ENCODE measurements at regions of chr12 and their contacts with region 1.

Region 1: DNA sequence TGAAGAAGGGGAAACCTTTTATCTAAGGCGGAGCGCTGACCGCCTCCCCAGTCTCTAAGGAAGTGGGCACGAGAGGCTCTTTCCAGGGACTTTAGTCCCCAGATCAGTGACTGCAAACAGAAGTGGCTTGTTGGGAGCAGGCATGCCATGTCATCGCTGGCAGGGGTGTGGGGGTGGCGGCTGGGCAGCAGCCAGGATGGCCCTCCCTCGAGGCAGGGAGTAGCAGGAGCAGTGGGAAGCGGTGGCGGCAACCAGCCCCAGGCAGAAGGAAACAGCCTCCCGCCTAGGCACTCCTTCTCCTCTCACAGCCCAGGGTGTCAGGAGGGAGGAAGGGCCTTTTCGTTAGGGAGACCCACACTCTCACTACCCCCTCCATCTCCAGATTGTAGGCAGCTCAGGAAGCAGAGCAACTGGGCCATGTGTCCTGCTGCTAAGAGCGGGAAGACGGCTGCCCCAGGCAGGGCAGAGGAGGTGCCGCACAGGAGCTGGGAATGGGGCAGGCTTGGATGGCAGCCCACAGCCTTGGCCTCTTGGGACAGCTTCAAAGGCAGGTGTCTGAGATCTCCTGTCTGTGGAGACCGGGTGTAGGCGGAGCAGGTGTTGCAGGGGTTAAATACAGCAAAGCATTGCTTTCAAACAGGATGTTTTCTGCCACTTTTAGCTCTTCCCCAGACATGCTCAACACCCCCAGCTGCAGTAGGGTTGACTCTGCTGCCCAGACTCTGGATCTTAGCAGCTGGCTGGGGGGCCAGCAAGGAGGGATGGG is 21.8 kb downstream of the VDR start:
- DNase-seq: peak; percentile 44
- H3K4me3 Mint-ChIP-seq: peak overlapping the region; percentile 94
- H3K27ac Mint-ChIP-seq: peak overlapping the region; percentile 100
- H3K4me1 Mint-ChIP-seq: peaks cover 91% of the 10 kb centered on the region
- H3K27me3 Mint-ChIP-seq: no peaks in the 10 kb centered on the region

Region 2: GRCh38 chr12:47079468-47079980 is 803.4 kb before region 1 on chr12 and contains the starts of genes AMIGO2 and PCED1B:
- intact Hi-C with region 1: loop called (anchors 10 kb)
- DNase-seq: peak; percentile 63
- H3K4me3 Mint-ChIP-seq: peak within 1 kb of the TSS; percentile 97
- H3K27ac Mint-ChIP-seq: peak within 1 kb of the TSS; percentile 97
- H3K4me1 Mint-ChIP-seq: peaks cover 81% of the 10 kb centered on the region
- H3K27me3 Mint-ChIP-seq: no peaks in the 10 kb centered on the region
- total RNA-seq, gene AMIGO2: 11.6 and 12.5 TPM in 2 replicates
- total RNA-seq, gene PCED1B: 50.8 and 55.5 TPM in 2 replicates

Region 3: GRCh38 chr12:47797441-47797840 is 85.5 kb before region 1 on chr12:
- intact Hi-C with region 1: no loop called
- DNase-seq: no peak
- H3K4me3 Mint-ChIP-seq: no peak overlapping the region
- H3K27ac Mint-ChIP-seq: peak overlapping the region; percentile 65
- H3K4me1 Mint-ChIP-seq: peaks cover 33% of the 10 kb centered on the region
- H3K27me3 Mint-ChIP-seq: no peaks in the 10 kb centered on the region

Region 4: DNA sequence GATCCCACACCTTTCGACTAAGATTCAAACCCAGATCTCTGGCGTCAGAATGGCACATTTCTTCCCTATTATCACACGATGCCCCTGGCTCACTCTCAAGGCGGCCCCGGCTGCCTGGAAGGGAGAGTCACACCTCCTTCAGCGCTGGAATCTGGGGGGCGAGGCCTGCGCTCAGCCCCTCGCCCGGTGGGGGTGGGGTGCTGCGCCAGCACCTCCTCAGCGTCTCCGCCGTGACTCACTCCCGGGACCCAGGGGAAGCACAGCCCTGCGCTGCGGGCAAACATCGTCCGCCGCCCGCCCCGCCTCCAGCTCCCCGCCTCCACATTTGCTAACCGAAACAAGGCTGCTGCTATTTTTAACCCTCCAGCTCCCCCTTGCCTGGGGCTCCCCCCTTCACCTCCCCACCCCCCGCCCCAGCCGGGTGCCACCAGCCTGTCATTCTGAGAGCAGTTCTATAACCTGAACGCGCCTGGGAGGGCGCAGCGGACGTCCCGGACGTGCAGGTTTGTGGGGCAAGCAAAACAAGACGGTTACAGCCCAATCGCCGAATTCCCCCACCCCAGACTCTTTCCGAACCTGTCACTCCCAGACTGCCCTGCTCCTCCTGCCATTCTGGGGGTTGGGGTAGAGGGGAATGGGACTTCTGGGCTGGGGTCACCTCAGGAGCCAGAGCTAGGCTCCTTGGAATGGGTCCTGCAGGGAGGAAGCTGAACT is 70.0 kb before region 1 on chr12:
- intact Hi-C with region 1: loop called (anchors 1 kb)
- DNase-seq: peak; percentile 92
- H3K4me3 Mint-ChIP-seq: peak overlapping the region; percentile 96
- H3K27ac Mint-ChIP-seq: peak overlapping the region; percentile 98
- H3K4me1 Mint-ChIP-seq: peaks cover 92% of the 10 kb centered on the region
- H3K27me3 Mint-ChIP-seq: no peaks in the 10 kb centered on the region

Region 5: DNA sequence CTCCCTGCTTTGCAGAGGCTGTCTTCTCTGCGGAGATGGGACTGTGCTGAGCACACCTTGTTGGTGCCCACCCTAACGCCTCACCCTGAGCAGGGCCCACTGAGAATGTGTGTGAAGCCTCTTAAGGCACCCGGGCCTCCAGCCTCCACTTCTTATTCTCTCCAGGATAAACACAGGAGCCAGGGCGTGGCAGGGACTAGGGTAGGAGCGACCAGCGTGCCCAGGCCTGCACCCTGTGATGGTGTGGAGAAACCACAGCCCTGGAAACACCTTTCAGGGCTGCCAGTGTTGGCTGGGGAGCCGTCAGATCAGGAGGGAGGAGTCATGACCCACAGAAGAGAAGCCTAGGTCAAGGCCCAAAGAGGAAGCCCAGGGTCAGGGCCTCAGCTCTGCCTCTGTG is 19.5 kb before region 1 on chr12:
- intact Hi-C with region 1: loop called (anchors 1 kb)
- DNase-seq: no peak
- H3K4me3 Mint-ChIP-seq: no peak overlapping the region
- H3K27ac Mint-ChIP-seq: peak overlapping the region; percentile 80
- H3K4me1 Mint-ChIP-seq: peaks cover 92% of the 10 kb centered on the region
- H3K27me3 Mint-ChIP-seq: no peaks in the 10 kb centered on the region

Region 6: DNA sequence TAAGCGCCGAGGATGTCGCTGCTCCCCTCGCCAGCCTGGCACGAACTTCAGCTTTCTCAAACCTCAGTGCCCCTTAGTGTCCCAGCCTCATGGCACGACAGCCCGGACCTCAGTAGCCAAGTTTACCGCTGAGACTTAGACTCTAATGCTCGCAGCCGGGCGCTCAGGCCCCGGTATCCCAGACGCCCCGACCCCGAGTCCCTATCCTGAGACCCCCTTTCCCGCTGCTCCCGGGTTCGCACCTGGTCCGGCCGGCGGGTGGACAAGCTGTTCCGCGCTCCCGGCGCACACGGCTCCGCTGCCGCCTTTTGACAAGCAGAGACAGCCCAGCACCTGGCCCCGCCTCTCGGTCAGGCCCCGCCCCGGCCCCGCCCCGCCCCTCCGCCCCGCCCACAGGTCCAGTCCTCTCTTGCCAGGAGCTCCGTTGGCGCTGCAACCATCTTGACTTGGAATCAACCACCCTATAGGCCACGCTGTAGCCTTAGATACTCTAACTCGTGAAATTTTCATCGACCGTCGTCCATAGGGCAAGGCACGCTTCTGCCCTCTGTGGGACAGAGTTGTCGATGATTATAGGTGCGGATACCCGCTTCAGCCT is 21.8 kb after region 1 on chr12 and contains the start of gene VDR:
- intact Hi-C with region 1: loop called (anchors 1 kb)
- DNase-seq: peak; percentile 62
- H3K4me3 Mint-ChIP-seq: peak within 1 kb of the TSS; percentile 100
- H3K27ac Mint-ChIP-seq: peak within 1 kb of the TSS; percentile 99
- H3K4me1 Mint-ChIP-seq: peaks cover 53% of the 10 kb centered on the region
- H3K27me3 Mint-ChIP-seq: peaks cover 34% of the 10 kb centered on the region
- total RNA-seq, gene VDR: 305 and 318 TPM in 2 replicates

Region 7: GRCh38 chr12:48183091-48183875 is 300.3 kb after region 1 on chr12 and contains the start of gene CCDC184:
- intact Hi-C with region 1: loop called (anchors 5 kb)
- DNase-seq: peak; percentile 76
- H3K4me3 Mint-ChIP-seq: peak within 1 kb of the TSS; percentile 91
- H3K27ac Mint-ChIP-seq: peak within 1 kb of the TSS; percentile 82
- H3K4me1 Mint-ChIP-seq: peaks cover 35% of the 10 kb centered on the region
- H3K27me3 Mint-ChIP-seq: peaks cover 52% of the 10 kb centered on the region
- total RNA-seq, gene CCDC184: 0.61 and 0.75 TPM in 2 replicates

Region 8: DNA sequence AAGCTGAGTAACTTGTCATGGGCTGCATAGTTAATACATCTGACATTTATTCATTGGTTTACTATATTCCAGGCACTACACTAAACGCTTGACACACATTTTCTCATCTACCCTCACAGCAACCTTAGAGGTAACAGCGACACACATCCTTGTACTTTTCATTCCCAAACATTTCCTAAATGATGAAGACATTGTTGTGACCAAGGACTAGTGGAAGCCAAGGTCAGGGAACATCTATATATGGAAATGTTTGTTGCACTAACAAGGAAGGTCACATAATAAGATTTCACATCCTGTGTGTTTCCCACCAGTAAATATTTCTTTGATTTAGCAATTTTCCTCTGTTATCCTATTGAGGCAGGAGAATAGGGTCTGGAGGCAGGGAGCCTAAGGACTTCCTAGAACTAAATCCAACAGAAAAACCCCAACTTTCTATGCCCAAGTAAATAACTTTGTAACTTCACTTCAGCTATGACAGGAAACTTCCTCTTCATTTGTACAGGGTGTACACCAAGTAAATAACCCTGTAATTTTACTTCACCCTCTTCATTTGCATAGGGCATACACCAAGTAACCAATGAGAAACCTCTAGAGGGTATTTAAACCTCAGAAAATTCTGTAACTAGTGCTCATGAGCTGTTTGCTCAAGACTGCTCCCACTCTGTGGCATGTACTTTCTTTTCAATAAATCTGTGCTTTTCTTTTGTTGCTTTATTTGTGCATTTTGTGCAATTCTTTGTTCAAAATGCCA is 419.4 kb after region 1 on chr12:
- intact Hi-C with region 1: no loop called
- DNase-seq: no peak
- H3K4me3 Mint-ChIP-seq: no peak overlapping the region
- H3K27ac Mint-ChIP-seq: no peak overlapping the region
- H3K4me1 Mint-ChIP-seq: no peaks in the 10 kb centered on the region
- H3K27me3 Mint-ChIP-seq: peaks cover 6% of the 10 kb centered on the region

Region 9: GRCh38 chr12:48631057-48631456 is 748.1 kb after region 1 on chr12:
- intact Hi-C with region 1: no loop called
- DNase-seq: no peak
- H3K4me3 Mint-ChIP-seq: no peak overlapping the region
- H3K27ac Mint-ChIP-seq: no peak overlapping the region
- H3K4me1 Mint-ChIP-seq: no peaks in the 10 kb centered on the region
- H3K27me3 Mint-ChIP-seq: peaks cover 5% of the 10 kb centered on the region